Sciatic nerve (tissue), 2 donors: ENCODE measurements at regions of chr18 and their contacts with region 1.

Region 1: GRCh38 chr18:78939105-78939504 is 40.5 kb upstream of the SALL3 start:
- DNase-seq: peak; percentile 18
- ATAC-seq: no peak

Region 2: GRCh38 chr18:77557046-77557587 is 1382.0 kb before region 1 on chr18:
- intact Hi-C with region 1: loop called (anchors 5 kb)
- DNase-seq: no peak
- ATAC-seq: no peak

Region 3: GRCh38 chr18:78927156-78927555 is 11.9 kb before region 1 on chr18:
- intact Hi-C with region 1: no loop called
- DNase-seq: peak; percentile 45
- ATAC-seq: no peak